OCI-LY7 (cell line): ENCODE measurements at regions of chr6 and their contacts with region 1.

Region 1: GRCh38 chr6:26196846-26197648 is 109.8 kb downstream of the HFE start:
- DNase-seq: peak; percentile 96
- H3K4me3 ChIP-seq: peak overlapping the region; percentile 91
- H3K27ac ChIP-seq: peak overlapping the region; percentile 93
- H3K4me1 ChIP-seq: peaks cover 39% of the 10 kb centered on the region
- CTCF ChIP-seq: peak; percentile 31; the same call in 1 of the 2 replicates

Region 2: GRCh38 chr6:26054857-26055669 is 142.0 kb before region 1 on chr6:
- CTCF ChIA-PET with region 1: no interaction called
- POLR2A ChIA-PET with region 1: interaction called, 5 read pairs
- intact Hi-C with region 1: loop called (anchors 5 kb)
- DNase-seq: peak; percentile 93
- H3K4me3 ChIP-seq: peak overlapping the region; percentile 70
- H3K27ac ChIP-seq: peak overlapping the region; percentile 93
- H3K4me1 ChIP-seq: peaks cover 41% of the 10 kb centered on the region
- CTCF ChIP-seq: no peak

Region 3: GRCh38 chr6:26141378-26141904 is 55.6 kb before region 1 on chr6:
- CTCF ChIA-PET with region 1: no interaction called
- POLR2A ChIA-PET with region 1: no interaction called
- intact Hi-C with region 1: no loop called
- DNase-seq: no peak
- H3K4me3 ChIP-seq: no peak overlapping the region
- H3K27ac ChIP-seq: no peak overlapping the region
- H3K4me1 ChIP-seq: peaks cover 9% of the 10 kb centered on the region
- CTCF ChIP-seq: no peak

Region 4: DNA sequence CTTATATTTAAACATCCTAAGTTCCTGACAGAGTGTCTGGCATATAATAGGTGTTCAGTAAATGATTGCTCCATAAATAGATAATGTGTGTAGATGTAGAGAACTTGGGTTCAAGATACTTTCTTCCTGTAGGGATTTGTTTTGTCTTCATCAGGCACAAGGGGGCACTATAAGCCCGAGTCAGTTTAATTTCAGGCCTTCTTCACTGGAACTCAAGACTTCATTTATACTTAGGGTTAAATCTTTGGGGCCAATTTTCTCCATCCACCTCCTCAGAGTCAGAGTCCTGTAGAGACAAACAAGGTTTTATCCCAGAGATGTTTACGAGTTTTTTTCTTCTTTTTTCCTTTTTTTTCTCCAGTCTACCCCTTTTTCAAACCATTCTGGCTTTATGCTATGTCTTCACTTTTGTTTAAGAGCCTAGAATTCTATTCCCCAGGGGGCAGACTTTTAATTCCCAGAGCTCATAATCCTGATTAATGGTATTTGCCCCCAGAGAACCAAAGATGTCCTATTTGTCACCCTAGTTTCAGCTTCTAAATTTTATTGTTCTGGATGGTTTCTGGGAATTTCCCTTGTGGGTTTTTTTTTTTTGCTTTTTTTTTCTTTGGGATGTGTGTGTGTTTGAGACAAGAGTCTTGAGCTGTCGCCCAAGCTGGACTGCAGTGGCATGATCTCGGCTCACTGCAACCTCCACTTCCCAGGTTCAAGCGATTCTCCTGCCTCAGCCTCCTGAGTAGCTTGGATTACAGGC is 21.4 kb before region 1 on chr6:
- CTCF ChIA-PET with region 1: no interaction called
- POLR2A ChIA-PET with region 1: interaction called, 45 read pairs
- intact Hi-C with region 1: loop called (anchors 1 kb)
- DNase-seq: peak; percentile 79
- H3K4me3 ChIP-seq: peak overlapping the region; percentile 74
- H3K27ac ChIP-seq: peak overlapping the region; percentile 94
- H3K4me1 ChIP-seq: peaks cover 30% of the 10 kb centered on the region
- CTCF ChIP-seq: peak; percentile 95

Region 5: DNA sequence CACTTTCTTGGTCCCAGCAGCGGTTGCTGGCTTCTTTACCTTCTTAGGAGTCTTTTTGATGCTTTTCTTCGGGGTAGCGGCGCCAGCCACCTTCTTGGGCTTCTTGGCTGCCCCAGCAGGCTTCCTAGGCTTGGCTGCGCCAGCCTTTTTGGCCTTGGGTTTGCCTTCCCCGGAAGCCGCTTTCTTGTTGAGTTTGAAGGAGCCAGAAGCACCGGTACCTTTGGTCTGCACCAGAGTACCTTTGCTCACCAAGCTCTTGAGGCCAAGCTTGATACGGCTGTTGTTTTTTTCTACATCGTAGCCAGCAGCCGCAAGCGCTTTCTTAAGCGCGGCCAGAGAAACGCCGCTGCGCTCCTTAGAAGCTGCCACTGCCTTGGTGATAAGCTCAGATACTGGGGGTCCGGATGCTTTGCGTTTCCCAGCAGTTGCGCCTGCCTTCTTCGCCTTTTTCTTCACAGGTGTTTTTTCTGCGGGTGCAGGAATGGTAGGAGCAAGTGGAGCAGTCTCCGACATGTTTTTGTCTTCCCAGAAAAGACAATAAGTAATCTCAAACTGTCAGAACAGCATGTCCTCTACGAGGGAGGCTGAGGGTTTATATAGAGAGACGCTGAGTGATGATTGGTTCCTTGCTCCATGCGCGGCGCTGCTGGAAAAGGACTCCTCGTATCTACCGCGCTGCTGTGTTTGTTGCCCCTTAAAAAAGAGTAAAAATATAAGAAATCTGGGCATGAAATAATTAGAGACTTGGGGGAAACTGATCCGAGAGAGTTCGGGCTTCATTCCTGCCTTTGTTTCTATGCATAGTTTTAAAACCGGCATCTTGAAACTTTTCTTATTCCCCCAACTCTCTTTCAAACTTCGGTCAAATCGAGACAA is 37.6 kb after region 1 on chr6:
- CTCF ChIA-PET with region 1: no interaction called
- POLR2A ChIA-PET with region 1: interaction called, 52 read pairs
- intact Hi-C with region 1: no loop called
- DNase-seq: peak; percentile 90
- H3K4me3 ChIP-seq: peak overlapping the region; percentile 69
- H3K27ac ChIP-seq: peak overlapping the region; percentile 92
- H3K4me1 ChIP-seq: peaks cover 26% of the 10 kb centered on the region
- CTCF ChIP-seq: no peak

Region 6: DNA sequence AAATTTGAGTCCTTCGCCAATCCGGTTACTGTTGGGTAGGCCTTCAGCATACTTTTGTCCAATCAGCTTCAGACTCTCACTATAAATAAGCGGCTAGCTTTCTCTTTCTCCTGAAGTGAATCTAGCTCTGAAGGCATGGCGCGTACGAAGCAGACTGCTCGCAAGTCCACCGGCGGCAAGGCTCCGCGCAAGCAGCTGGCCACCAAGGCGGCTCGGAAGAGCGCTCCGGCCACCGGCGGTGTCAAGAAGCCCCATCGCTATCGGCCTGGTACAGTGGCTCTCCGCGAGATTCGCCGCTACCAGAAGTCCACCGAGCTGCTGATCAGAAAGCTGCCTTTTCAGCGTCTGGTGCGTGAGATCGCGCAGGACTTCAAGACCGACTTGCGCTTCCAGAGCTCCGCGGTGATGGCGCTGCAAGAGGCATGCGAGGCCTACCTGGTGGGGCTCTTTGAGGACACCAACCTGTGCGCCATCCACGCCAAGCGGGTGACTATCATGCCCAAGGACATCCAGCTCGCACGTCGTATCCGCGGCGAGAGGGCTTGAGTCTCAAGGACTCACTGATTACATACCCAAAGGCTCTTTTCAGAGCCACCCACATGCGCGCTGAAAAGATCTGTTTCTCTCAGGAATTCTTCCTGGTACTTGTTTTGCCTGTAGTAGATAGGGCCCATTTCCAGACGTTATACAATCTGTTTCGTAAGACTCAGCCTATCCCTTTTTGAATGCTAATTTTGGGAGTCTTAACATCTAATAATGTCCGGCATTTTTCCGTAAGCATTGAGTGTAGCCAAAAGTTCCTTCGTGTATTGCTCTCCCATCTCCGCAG is 1613.1 kb after region 1 on chr6:
- CTCF ChIA-PET with region 1: no interaction called
- POLR2A ChIA-PET with region 1: interaction called, 5 read pairs
- intact Hi-C with region 1: loop called (anchors 2 kb)
- DNase-seq: peak; percentile 96
- H3K4me3 ChIP-seq: peak overlapping the region; percentile 82
- H3K27ac ChIP-seq: peak overlapping the region; percentile 96
- H3K4me1 ChIP-seq: peaks cover 62% of the 10 kb centered on the region
- CTCF ChIP-seq: peak; percentile 12; the same call in 1 of the 2 replicates